ENCODE measurements at regions of chr19 and their contacts with region 1.

Region 1: GRCh38 chr19:9435279-9436268 is at the start of gene ZNF266:
- DNase-seq: peak; percentile 89 to 92 (median 91)
- H3K4me3 ChIP-seq: peak within 1 kb of the TSS; percentile 49 to 85
- H3K4me3 Mint-ChIP-seq: peak within 1 kb of the TSS; percentile 92 to 98 (median 96)
- H3K27ac ChIP-seq: peak within 1 kb of the TSS; percentile 87
- H3K27ac Mint-ChIP-seq: peak within 1 kb of the TSS; percentile 97 to 98 (median 98)
- H3K4me1 ChIP-seq: peaks cover 30% of the 10 kb centered on the region
- H3K4me1 Mint-ChIP-seq: peaks cover 20 to 49% (median 36%) of the 10 kb centered on the region in 4 donors
- H3K27me3 ChIP-seq: no peaks in the 10 kb centered on the region
- H3K27me3 Mint-ChIP-seq: no peaks in the 10 kb centered on the region
- total RNA-seq, gene ZNF266: 73.4 to 76.4 TPM

Region 2: DNA sequence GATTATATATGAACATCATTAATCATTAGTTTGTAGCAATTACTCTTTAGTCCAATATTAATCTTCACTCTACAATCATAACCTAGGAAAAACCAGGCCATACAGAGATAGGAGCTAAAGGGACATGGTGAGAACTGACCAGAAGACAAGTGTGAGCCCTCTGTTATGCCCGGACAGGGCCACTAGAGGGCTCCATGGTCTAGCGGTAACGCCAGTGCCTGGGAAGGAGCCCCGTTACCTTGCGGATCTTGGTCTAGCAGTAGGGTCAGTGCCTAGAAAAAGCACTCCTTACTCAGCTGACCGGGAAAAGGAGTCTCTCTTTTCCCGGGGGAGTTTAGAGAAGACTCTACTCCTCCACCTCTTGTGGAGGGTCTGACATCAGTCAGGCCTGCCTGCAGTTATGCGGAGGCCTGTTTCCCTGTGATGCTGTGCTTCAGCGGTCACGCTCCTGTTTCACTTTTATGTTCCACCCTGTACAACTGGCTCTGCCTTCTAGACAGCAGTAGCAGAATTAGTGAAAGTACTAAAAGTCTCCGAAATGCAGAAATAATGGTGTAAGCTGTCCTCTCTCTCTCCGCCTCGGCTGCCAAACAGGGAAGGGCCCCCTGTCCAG is 230.0 kb before region 1 on chr19:
- CTCF ChIA-PET with region 1: interaction called, 18 read pairs
- POLR2A ChIA-PET with region 1: interaction called, 3 read pairs
- intact Hi-C with region 1: no loop called
- DNase-seq: peak; percentile 43 to 59 (median 52)
- H3K4me3 ChIP-seq: no peak overlapping the region
- H3K4me3 Mint-ChIP-seq: peak overlapping the region in 7 of 8 donors; percentile 6 to 62 (median 57)
- H3K27ac ChIP-seq: no peak overlapping the region
- H3K27ac Mint-ChIP-seq: no peak overlapping the region
- H3K4me1 ChIP-seq: peaks cover 4% of the 10 kb centered on the region
- H3K4me1 Mint-ChIP-seq: peaks cover 0 to 9% (median 3%) of the 10 kb centered on the region in 4 donors
- H3K27me3 ChIP-seq: no peaks in the 10 kb centered on the region
- H3K27me3 Mint-ChIP-seq: peaks cover 0 to 13% of the 10 kb centered on the region in 2 donors

Region 3: DNA sequence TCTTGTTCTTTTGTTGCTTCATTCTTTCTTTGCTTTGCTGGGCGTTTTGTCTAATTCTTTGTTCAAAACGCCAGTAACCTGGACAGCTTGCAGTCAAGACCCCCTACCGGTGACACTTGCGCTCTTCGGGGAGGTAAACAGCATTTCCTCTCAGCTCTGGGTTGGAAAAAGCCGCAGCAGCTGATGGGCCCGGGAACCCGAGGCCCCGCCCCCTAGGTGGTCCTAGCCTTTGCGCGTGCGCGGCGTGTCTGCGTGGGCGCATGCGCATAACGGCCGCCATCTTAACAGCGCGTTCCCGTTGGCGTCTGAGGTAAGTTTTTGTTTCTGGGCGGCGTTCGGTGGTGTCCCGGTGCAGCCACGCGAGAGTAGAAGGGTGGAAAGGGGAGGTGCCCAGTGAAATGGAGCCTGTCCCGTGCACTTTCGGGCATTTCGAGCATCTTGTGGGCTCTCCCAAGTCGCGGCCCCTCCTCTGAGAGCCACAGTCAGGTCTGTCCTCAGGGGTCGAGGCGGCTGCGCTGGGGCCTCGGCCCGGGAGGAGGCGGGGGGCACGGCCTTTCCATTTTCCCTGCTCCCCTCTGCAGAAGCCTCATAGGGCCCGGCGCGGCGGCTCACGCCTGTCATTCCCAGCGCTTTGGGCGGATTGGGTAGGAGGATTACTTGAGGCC is 111.5 kb before region 1 on chr19 and contains the start of gene ZNF559:
- CTCF ChIA-PET with region 1: no interaction called
- POLR2A ChIA-PET with region 1: no interaction called
- intact Hi-C with region 1: loop called (anchors 5 kb)
- DNase-seq: peak; percentile 95 to 98 (median 97)
- H3K4me3 ChIP-seq: peak within 1 kb of the TSS; percentile 62 to 83
- H3K4me3 Mint-ChIP-seq: peak within 1 kb of the TSS; percentile 88 to 98 (median 95)
- H3K27ac ChIP-seq: peak within 1 kb of the TSS; percentile 67
- H3K27ac Mint-ChIP-seq: peak within 1 kb of the TSS; percentile 91 to 97 (median 97)
- H3K4me1 ChIP-seq: peaks cover 20% of the 10 kb centered on the region
- H3K4me1 Mint-ChIP-seq: peaks cover 18 to 39% (median 22%) of the 10 kb centered on the region in 4 donors
- H3K27me3 ChIP-seq: no peaks in the 10 kb centered on the region
- H3K27me3 Mint-ChIP-seq: no peaks in the 10 kb centered on the region
- total RNA-seq, gene ZNF559: 47.4 to 53.5 TPM

Region 4: DNA sequence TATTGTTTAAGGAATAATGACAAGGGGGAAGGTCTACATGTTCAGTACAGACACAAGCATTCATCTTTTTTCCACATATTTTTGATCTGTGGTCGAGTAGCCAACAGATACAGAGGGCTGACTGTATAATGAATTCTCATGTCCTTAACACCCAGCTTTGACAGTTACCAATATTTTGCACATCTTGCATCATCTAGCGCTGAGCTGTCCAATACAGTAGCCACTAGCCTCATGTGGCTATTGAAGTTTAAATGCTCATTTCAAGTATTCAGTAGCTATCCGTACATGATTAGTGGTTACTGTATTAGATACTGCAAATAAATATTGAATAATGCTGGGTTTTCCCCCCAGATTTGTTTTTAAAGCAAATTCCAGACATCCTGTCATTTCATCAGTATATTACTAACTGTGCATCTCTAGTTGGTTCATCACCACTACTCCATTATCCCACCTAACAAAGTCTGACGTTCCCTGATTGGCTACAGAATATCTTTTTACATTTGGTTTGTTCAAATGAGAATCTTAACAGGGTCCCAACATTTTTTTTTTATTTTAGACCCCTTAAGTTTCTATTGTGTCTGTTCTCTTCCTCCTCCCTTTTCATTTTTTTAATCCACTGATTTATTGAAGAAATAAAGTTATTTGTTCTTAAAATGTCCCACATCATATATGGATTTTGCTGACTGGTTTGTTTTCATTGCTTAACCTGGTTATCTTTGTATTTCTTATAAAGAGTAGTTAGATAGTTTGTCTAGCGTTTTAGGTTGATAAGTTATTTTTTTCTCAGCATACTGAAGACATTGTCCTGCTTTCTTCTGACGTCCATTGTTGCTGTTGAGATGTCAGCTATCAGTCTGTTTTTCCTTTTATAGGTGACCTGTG is 64.6 kb before region 1 on chr19:
- CTCF ChIA-PET with region 1: no interaction called
- POLR2A ChIA-PET with region 1: no interaction called
- intact Hi-C with region 1: no loop called
- DNase-seq: no peak
- H3K4me3 ChIP-seq: no peak overlapping the region
- H3K4me3 Mint-ChIP-seq: no peak overlapping the region
- H3K27ac ChIP-seq: no peak overlapping the region
- H3K27ac Mint-ChIP-seq: no peak overlapping the region
- H3K4me1 ChIP-seq: no peaks in the 10 kb centered on the region
- H3K4me1 Mint-ChIP-seq: no peaks in the 10 kb centered on the region
- H3K27me3 ChIP-seq: no peaks in the 10 kb centered on the region
- H3K27me3 Mint-ChIP-seq: no peaks in the 10 kb centered on the region

Region 5: DNA sequence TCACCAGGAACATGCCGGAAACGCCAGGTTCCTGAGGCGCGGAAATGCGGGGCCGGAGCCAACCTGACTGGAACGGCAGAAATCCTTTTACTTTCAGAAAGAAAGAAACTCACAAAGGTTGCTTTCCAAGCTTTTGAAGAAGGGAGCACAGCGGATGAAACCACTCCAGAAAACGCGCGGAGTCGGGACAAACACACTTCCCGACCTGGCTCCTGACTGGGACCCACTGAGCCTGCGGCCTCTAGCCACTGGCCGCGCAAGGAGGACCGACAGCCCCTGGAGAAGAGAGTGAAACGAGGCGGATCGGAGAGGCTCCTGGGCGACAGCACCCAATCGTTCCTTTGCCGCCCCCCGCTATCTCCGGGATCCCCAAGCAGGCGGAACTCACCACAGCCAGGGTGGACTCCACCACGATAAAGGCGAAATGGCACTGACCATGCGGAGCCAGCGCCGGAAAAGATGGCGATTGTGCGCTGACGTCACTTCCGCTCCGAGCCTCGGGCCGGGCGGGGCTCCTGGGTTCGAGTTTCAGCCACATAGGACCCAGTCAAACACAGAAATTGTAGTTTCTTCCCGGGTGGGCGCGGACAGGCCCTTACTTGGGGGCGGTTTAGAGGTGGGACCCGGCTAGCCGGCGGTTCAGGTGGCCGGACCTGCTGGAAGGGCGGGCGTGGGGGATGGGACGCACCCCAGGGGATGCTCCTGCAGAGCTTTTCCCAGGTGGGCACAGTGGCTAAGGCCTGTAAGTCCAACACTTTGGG is 148.7 kb after region 1 on chr19 and contains the start of gene ZNF121:
- CTCF ChIA-PET with region 1: interaction called, 3 read pairs
- POLR2A ChIA-PET with region 1: interaction called, 13 read pairs
- intact Hi-C with region 1: loop called (anchors 1 kb)
- DNase-seq: peak; percentile 67 to 76 (median 73)
- H3K4me3 ChIP-seq: peak within 1 kb of the TSS; percentile 99 to 100
- H3K4me3 Mint-ChIP-seq: peak within 1 kb of the TSS; percentile 94 to 99 (median 97)
- H3K27ac ChIP-seq: peak within 1 kb of the TSS; percentile 97
- H3K27ac Mint-ChIP-seq: peak within 1 kb of the TSS; percentile 96 to 99 (median 98)
- H3K4me1 ChIP-seq: peaks cover 26% of the 10 kb centered on the region
- H3K4me1 Mint-ChIP-seq: peaks cover 21 to 55% (median 34%) of the 10 kb centered on the region in 4 donors
- H3K27me3 ChIP-seq: no peaks in the 10 kb centered on the region
- H3K27me3 Mint-ChIP-seq: peaks cover 2 to 4% of the 10 kb centered on the region in 2 donors
- total RNA-seq, gene ZNF121: 47.2 to 53.0 TPM